Stomach (tissue), 19 donors: ENCODE measurements at regions of chr13 and their contacts with region 1.

Region 1: GRCh38 chr13:108322206-108322824 is 52.8 kb downstream of the TNFSF13B start:
- DNase-seq: peak in 1 of 2 donors; percentile 68
- H3K4me3 ChIP-seq: no peak overlapping the region
- H3K27ac ChIP-seq: no peak overlapping the region
- H3K4me1 ChIP-seq: peaks cover 0 to 4% (median 0%) of the 10 kb centered on the region in 4 donors
- H3K27me3 ChIP-seq: peaks cover 0 to under 1% (median 0%) of the 10 kb centered on the region in 3 donors
- CTCF ChIP-seq: peak in 5 of 7 experiments; percentile 34 to 69 (median 61)
- EP300 ChIP-seq: no peak
- POLR2A ChIP-seq: no peak

Region 2: DNA sequence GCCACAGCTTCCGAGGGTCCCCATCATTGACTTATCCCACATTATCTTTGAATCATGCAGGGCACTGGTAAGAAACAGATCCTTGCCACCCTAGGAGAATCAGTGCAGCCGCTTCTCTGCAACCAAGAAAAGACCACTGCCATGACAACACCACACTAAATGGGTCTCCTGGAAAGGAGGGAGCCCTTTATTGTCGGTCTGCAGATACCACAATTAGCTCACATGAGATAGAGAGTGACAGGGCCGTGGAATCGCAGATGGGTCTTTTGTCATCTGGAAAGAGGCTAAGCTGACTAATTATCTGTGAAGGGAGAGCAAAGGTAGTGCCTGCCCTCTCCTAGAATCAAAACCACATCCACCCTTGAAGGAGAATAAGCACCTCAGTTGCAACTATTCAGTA is 128.8 kb after region 1 on chr13:
- intact Hi-C with region 1: no loop called
- DNase-seq: no peak
- H3K4me3 ChIP-seq: no peak overlapping the region
- H3K27ac ChIP-seq: no peak overlapping the region
- H3K4me1 ChIP-seq: no peaks in the 10 kb centered on the region
- H3K27me3 ChIP-seq: no peaks in the 10 kb centered on the region
- CTCF ChIP-seq: no peak
- EP300 ChIP-seq: no peak
- POLR2A ChIP-seq: no peak

Region 3: GRCh38 chr13:108895220-108895704 is 572.9 kb after region 1 on chr13:
- intact Hi-C with region 1: loop called (anchors 10 kb)
- DNase-seq: peak in 1 of 2 donors; percentile 69
- H3K4me3 ChIP-seq: no peak overlapping the region
- H3K27ac ChIP-seq: no peak overlapping the region
- H3K4me1 ChIP-seq: peaks cover 0 to 6% (median 0%) of the 10 kb centered on the region in 4 donors
- H3K27me3 ChIP-seq: no peaks in the 10 kb centered on the region
- CTCF ChIP-seq: peak in 4 of 7 experiments; percentile 20 to 56 (median 47)
- EP300 ChIP-seq: no peak
- POLR2A ChIP-seq: no peak